ENCODE measurements at regions of chr2 and their contacts with region 1.

Region 1: DNA sequence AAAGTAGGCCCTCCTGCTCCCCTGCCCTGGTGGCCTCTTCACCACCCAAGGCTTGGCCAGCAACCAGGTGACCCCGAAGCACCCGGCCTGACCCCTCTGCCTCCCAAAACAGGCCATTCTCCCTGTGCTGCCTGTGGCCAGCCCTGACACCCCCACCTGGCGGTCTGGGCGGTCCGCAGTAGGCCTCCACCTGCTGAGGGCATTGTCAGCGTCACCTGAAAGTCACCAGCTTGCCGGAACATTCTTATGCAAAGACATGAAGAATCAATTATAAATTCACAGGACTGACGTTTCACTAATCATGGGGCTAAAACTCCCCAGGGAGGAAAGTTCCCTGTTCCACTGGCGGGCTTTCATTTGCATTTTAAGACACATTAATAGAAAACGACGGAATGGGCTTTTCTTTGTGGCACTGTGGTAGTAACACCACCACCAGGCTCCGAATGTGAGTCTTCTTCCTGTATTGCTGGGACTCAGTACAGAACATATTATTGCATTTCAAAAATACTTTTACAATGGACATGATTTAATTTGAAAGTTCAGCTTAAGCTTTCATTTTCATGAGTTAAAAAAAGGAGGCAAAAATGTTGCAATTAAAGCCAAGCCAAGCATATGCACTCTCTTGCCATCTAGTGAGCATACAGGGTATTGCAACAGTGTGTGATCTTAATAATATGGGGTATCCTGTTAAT is 57.4 kb downstream of the ADI1 start:
- DNase-seq: peak; percentile 58
- ATAC-seq: peak; percentile 94
- H3K4me3 Mint-ChIP-seq: no peak overlapping the region
- H3K27ac Mint-ChIP-seq: peak overlapping the region; percentile 74
- H3K4me1 Mint-ChIP-seq: peaks cover 11% of the 10 kb centered on the region
- H3K27me3 Mint-ChIP-seq: no peaks in the 10 kb centered on the region
- CTCF ChIP-seq: peak; percentile 92

Region 2: DNA sequence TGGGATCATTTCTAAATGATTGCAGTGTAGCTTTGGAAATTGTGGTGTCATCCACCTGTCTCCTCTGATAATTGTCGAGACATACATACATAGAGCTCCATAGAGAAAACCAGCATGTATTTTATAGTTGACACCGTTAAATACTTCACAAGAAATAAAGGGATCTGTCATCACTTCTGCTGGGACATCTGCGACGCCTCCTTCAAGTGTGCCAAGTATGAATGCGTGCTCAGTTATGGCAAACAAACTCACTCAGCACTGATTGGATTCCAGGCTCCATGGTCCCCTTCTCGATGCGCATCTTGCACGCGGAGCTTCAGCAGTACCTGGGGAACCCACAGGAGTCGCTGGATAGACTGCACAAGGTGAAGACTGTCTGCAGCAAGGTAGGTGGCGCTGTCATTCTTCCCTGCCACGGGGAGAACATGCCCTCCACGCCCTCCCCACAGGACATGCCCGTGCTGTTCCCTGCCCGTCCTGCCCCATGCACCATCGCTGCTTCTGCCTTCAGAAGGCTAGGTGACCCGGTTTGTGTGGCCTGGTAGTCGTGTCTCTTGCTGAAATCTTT is 18.4 kb before region 1 on chr2:
- CTCF ChIA-PET with region 1: interaction called, 10 read pairs
- POLR2A ChIA-PET with region 1: no interaction called
- intact Hi-C with region 1: no loop called
- DNase-seq: no peak
- ATAC-seq: no peak
- H3K4me3 Mint-ChIP-seq: no peak overlapping the region
- H3K27ac Mint-ChIP-seq: no peak overlapping the region
- H3K4me1 Mint-ChIP-seq: peaks cover 16% of the 10 kb centered on the region
- H3K27me3 Mint-ChIP-seq: no peaks in the 10 kb centered on the region
- CTCF ChIP-seq: no peak

Region 3: GRCh38 chr2:3472966-3473365 is 11.0 kb after region 1 on chr2:
- CTCF ChIA-PET with region 1: interaction called, 30 read pairs
- POLR2A ChIA-PET with region 1: no interaction called
- intact Hi-C with region 1: no loop called
- DNase-seq: no peak
- ATAC-seq: no peak
- H3K4me3 Mint-ChIP-seq: no peak overlapping the region
- H3K27ac Mint-ChIP-seq: no peak overlapping the region
- H3K4me1 Mint-ChIP-seq: no peaks in the 10 kb centered on the region
- H3K27me3 Mint-ChIP-seq: no peaks in the 10 kb centered on the region
- CTCF ChIP-seq: no peak

Region 4: GRCh38 chr2:3505771-3506170 is 43.8 kb after region 1 on chr2:
- CTCF ChIA-PET with region 1: no interaction called
- POLR2A ChIA-PET with region 1: no interaction called
- intact Hi-C with region 1: no loop called
- DNase-seq: no peak
- ATAC-seq: no peak
- H3K4me3 Mint-ChIP-seq: no peak overlapping the region
- H3K27ac Mint-ChIP-seq: no peak overlapping the region
- H3K4me1 Mint-ChIP-seq: no peaks in the 10 kb centered on the region
- H3K27me3 Mint-ChIP-seq: no peaks in the 10 kb centered on the region
- CTCF ChIP-seq: no peak

Measured in activated CD8-positive, alpha-beta T cell treated with anti-CD3 and anti-CD28 coated beads for 36 hours (primary cell).